ENCODE measurements at regions of chr1 and their contacts with region 1.

Region 1: DNA sequence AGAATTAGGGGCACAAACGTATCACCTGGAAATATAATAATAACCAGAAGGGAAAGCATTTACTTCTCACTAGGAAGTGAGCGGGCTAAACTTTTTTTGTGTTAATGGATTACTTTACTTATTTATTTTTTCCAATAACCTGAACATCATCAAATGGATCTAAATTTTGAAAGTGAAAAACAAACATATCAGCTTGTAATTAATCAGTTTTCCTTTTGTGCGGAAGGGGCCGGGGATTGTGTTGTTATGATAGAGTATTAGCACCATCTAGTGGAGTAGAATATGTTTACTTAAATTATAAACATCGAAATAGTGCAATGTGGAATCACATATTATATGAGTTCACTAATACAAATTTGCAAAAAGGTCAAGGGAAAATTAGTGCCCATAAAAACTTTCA is 9.0 kb downstream of the CFH start:
- DNase-seq: no peak
- ATAC-seq: peak; percentile 76
- H3K4me3 ChIP-seq: no peak overlapping the region
- H3K27ac ChIP-seq: no peak overlapping the region
- H3K4me1 ChIP-seq: no peaks in the 10 kb centered on the region
- H3K27me3 ChIP-seq: no peaks in the 10 kb centered on the region; a peak in 1 of 4 replicates
- CTCF ChIP-seq: peak; percentile 19 to 60 (median 34); a peak in 5 of 6 replicates
- EP300 ChIP-seq: no peak
- POLR2A ChIP-seq: no peak
- RAD21 ChIP-seq: peak; percentile 76

Region 2: DNA sequence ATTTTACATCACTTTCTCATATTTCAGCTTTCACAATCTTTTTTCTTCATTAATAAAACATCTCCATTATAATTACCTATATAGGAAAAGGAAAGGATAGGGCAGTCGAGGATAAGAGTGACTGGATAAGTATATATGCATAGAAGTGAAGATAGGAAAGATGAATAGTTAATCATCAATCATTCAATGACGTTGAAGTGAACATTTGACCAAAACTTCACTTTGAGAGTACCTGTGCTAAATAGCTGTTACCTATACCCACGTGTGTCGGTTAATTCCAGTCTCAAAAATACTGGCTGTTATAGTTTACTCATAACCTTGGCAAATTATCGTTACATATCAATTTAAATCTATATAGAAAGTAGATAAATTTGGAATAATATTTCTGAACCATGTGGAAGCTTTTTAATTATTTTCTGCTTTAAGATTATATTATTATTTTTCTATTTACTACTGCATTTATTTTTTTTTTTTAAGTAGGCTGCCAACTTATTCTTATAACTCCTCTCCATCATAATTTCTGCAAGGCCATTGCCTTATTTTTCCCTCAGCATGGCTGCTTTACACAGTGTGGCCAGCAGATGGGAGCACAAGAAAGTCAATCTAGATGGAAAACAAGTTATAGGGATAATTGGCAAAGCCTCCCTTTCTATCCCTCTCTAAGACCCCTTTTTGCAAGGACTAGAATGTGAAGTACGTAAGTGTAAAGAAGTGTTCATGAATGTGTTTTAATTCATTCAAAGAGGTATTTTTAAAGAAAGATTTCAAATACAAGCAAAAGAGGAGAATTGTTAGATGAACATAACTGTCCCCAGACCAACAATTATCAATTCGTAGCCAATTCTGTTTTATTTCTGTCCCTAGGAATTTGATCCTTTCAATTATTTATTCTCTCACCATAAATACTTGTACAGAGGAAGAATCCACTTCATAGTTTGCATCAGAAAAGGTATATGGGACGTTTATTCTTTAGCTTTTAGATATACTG is 343.0 kb before region 1 on chr1:
- CTCF ChIA-PET with region 1: no interaction called
- POLR2A ChIA-PET with region 1: no interaction called
- RAD21 ChIA-PET with region 1: no interaction called
- SMC1A ChIA-PET with region 1: no interaction called
- in situ Hi-C with region 1: loop called (anchors 25 kb)
- intact Hi-C with region 1: loop called (anchors 2 kb)
- DNase-seq: no peak
- ATAC-seq: 0 out of 3 replicates have a peak, but pooled peaks have one; percentile 25
- H3K4me3 ChIP-seq: no peak overlapping the region
- H3K27ac ChIP-seq: no peak overlapping the region
- H3K4me1 ChIP-seq: no peaks in the 10 kb centered on the region
- H3K27me3 ChIP-seq: no peaks in the 10 kb centered on the region
- CTCF ChIP-seq: peak; percentile 26 to 35 (median 32); a peak in 4 of 6 replicates
- EP300 ChIP-seq: no peak
- POLR2A ChIP-seq: no peak
- RAD21 ChIP-seq: peak; percentile 28; the same call in 1 of the 2 replicates

Region 3: DNA sequence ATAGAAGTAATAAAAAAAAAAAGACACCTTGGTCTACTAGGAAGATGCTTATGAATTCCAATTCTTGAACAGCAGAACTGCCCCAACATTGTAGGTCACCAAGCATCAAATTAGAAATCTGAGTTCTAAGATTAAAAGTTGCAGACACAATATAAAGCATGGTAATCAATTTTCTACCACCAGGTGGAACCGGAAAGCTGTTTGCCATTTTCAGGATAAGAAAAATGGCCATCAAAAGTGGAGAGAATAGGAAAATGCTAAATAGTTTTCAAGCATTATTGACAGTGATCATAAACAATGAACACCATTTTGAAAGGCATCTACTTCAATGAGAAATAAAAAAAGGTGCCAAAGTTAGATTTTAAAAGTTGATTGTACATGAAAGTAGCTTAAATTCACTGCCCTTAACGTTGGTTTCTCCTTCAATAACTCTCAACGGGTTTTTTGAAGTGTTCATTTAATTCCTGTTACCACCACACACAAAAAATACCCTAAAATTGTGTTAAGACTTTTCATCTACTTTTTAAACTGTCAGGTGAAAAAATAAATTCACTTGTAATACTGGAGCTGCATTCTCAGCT is 305.6 kb before region 1 on chr1:
- CTCF ChIA-PET with region 1: interaction called, 4 read pairs
- POLR2A ChIA-PET with region 1: no interaction called
- RAD21 ChIA-PET with region 1: no interaction called
- SMC1A ChIA-PET with region 1: interaction called, 3 read pairs
- in situ Hi-C with region 1: no loop called
- intact Hi-C with region 1: loop called (anchors 10 kb)
- DNase-seq: no peak
- ATAC-seq: no peak
- H3K4me3 ChIP-seq: no peak overlapping the region
- H3K27ac ChIP-seq: no peak overlapping the region
- H3K4me1 ChIP-seq: no peaks in the 10 kb centered on the region
- H3K27me3 ChIP-seq: no peaks in the 10 kb centered on the region
- CTCF ChIP-seq: 0 out of 6 replicates have a peak, but pooled peaks of 1 of the 3 experiments have one; percentile 4
- EP300 ChIP-seq: no peak
- POLR2A ChIP-seq: no peak
- RAD21 ChIP-seq: no peak

Region 4: GRCh38 chr1:196376630-196377328 is 284.1 kb before region 1 on chr1:
- CTCF ChIA-PET with region 1: no interaction called
- POLR2A ChIA-PET with region 1: no interaction called
- RAD21 ChIA-PET with region 1: no interaction called
- SMC1A ChIA-PET with region 1: no interaction called
- in situ Hi-C with region 1: no loop called
- intact Hi-C with region 1: loop called (anchors 5 kb)
- DNase-seq: no peak
- ATAC-seq: peak; percentile 21; the same call in 1 of the 3 replicates
- H3K4me3 ChIP-seq: no peak overlapping the region
- H3K27ac ChIP-seq: no peak overlapping the region
- H3K4me1 ChIP-seq: no peaks in the 10 kb centered on the region
- H3K27me3 ChIP-seq: no peaks in the 10 kb centered on the region
- CTCF ChIP-seq: no peak
- EP300 ChIP-seq: no peak
- POLR2A ChIP-seq: no peak
- RAD21 ChIP-seq: no peak

Region 5: GRCh38 chr1:196951711-196952394 is 291.0 kb after region 1 on chr1:
- CTCF ChIA-PET with region 1: no interaction called
- POLR2A ChIA-PET with region 1: no interaction called
- RAD21 ChIA-PET with region 1: no interaction called
- SMC1A ChIA-PET with region 1: no interaction called
- in situ Hi-C with region 1: no loop called
- intact Hi-C with region 1: no loop called
- DNase-seq: peak; percentile 1
- ATAC-seq: peak; percentile 93
- H3K4me3 ChIP-seq: no peak overlapping the region; the same call in 1 of the 2 replicates
- H3K27ac ChIP-seq: no peak overlapping the region
- H3K4me1 ChIP-seq: no peaks in the 10 kb centered on the region
- H3K27me3 ChIP-seq: no peaks in the 10 kb centered on the region
- CTCF ChIP-seq: no peak
- EP300 ChIP-seq: no peak
- POLR2A ChIP-seq: no peak
- RAD21 ChIP-seq: no peak

Measured in GM12878 (cell line).